WTC11 (cell line): ENCODE measurements at regions of chr1 and their contacts with region 1.

Region 1: GRCh38 chr1:173867753-173868265 is at the start of gene GAS5:
- DNase-seq: peak; percentile 100
- ATAC-seq: peak; percentile 85
- H3K4me3 Mint-ChIP-seq: peak within 1 kb of the TSS; percentile 97
- H3K27ac Mint-ChIP-seq: peak within 1 kb of the TSS; percentile 100
- H3K4me1 Mint-ChIP-seq: peaks cover 63% of the 10 kb centered on the region
- H3K27me3 Mint-ChIP-seq: no peaks in the 10 kb centered on the region
- CTCF ChIP-seq: no peak
- total RNA-seq, gene GAS5: 818 to 891 TPM (median 878 TPM) in 3 replicates

Region 2: GRCh38 chr1:173648880-173649605 is 218.8 kb before region 1 on chr1:
- CTCF ChIA-PET with region 1: no interaction called
- POLR2A ChIA-PET with region 1: no interaction called
- DNase-seq: no peak
- ATAC-seq: no peak
- H3K4me3 Mint-ChIP-seq: no peak overlapping the region
- H3K27ac Mint-ChIP-seq: no peak overlapping the region
- H3K4me1 Mint-ChIP-seq: peaks cover 3% of the 10 kb centered on the region; the same call in 1 of the 2 replicates
- H3K27me3 Mint-ChIP-seq: no peaks in the 10 kb centered on the region
- CTCF ChIP-seq: no peak

Region 3: GRCh38 chr1:173824331-173825081 is 43.3 kb before region 1 on chr1 and contains the starts of genes CENPL and DARS2:
- CTCF ChIA-PET with region 1: interaction called, 3 read pairs
- POLR2A ChIA-PET with region 1: interaction called, 19 read pairs
- DNase-seq: peak; percentile 91
- ATAC-seq: peak; percentile 93
- H3K4me3 Mint-ChIP-seq: peak within 1 kb of the TSS; percentile 99
- H3K27ac Mint-ChIP-seq: peak within 1 kb of the TSS; percentile 99
- H3K4me1 Mint-ChIP-seq: peaks cover 16% of the 10 kb centered on the region
- H3K27me3 Mint-ChIP-seq: no peaks in the 10 kb centered on the region
- CTCF ChIP-seq: no peak
- total RNA-seq, gene CENPL: 17.2 to 20.1 TPM (median 18.3 TPM) in 3 replicates
- total RNA-seq, gene DARS2: 37.5 to 40.1 TPM (median 38.0 TPM) in 3 replicates

Region 4: DNA sequence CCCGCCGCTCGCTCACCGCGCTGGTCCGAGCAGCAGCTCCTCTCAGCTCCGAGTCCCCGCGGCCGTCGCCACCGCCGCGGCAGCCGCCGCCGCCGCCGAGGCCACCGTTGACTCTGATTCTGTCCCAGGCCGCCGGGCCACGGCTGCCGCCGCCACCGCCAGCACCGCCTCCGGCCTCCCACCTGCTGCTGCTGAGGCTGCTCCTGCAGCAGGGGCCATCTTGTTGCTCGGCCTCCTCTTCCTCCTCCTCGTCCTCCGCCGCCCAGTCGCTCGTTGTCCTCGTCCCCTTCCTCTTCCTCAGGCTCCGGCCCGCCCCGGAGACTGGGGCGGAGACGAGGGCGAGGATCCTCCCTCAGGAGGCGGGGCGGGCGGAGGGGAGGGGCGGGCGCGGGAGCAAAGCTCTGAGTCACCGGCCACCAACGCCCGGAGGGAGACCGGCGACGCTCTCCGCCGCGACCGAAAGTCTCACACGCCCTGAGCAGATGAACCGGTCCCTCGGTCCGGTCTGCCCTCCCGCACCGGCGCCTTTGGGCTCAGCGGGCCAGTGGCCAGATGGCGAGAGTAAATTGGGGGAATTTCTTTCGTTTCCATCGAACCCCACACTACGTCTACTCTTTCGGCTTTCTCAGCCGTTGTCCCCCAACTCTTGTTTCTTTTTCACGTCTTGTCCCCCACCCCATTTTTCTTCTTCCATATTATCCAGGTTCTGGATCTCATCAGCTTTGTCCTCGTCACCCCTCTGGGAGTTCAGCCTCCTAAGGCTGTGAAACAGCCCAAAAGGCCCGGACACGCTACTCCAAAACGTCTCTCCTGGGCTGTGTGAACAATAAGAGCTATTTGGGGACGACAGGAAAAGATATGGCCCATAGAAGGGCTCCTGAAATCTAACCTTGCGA is 154.5 kb after region 1 on chr1 and contains the start of gene RC3H1:
- CTCF ChIA-PET with region 1: no interaction called
- POLR2A ChIA-PET with region 1: interaction called, 12 read pairs
- DNase-seq: peak; percentile 85
- ATAC-seq: peak; percentile 85
- H3K4me3 Mint-ChIP-seq: peak within 1 kb of the TSS; percentile 91
- H3K27ac Mint-ChIP-seq: peak within 1 kb of the TSS; percentile 99
- H3K4me1 Mint-ChIP-seq: peaks cover 38% of the 10 kb centered on the region
- H3K27me3 Mint-ChIP-seq: peaks cover 8% of the 10 kb centered on the region
- CTCF ChIP-seq: no peak
- total RNA-seq, gene RC3H1: 24.1 to 25.7 TPM (median 25.4 TPM) in 3 replicates